ENCODE measurements at regions of chr7 and their contacts with region 1.

Region 1: GRCh38 chr7:90312745-90313144 is 8.4 kb downstream of the FAM237B start:
- DNase-seq: no peak

Region 2: GRCh38 chr7:90236721-90237289 is 75.9 kb before region 1 on chr7:
- intact Hi-C with region 1: no loop called
- DNase-seq: no peak

Region 3: DNA sequence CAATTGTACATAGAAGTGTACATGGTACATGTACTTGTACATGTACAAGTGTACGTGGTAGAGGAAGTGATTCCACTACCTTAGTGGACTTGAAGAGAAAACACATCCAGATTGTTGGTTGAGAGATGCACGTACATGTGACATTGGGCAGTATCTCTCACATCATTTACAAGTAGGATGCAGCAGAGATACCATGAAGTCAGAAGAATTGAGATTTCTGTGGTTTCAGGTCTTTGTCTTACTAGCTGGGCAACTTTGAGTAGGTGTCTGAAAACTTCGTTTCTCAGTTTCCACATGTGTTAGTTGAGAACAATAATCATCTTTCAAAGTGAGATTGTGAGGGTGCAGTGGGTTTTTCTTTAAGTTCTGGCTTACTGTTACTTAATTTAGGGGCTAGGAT is 112.0 kb after region 1 on chr7:
- intact Hi-C with region 1: loop called (anchors 10 kb)
- DNase-seq: no peak

Region 4: GRCh38 chr7:90488240-90488639 is 175.5 kb after region 1 on chr7:
- intact Hi-C with region 1: no loop called
- DNase-seq: no peak